CD8-positive, alpha-beta T cell (primary cell): ENCODE measurements at regions of chr3 and their contacts with region 1.

Region 1: GRCh38 chr3:23800731-23801130 is 5.0 kb upstream of the UBE2E1 start:
- DNase-seq: peak in 2 of 9 experiments; percentile 9 to 20
- ATAC-seq: no peak
- H3K4me3 ChIP-seq: no peak overlapping the region
- H3K4me3 Mint-ChIP-seq: no peak overlapping the region
- H3K27ac ChIP-seq: no peak overlapping the region
- H3K27ac Mint-ChIP-seq: no peak overlapping the region
- H3K4me1 ChIP-seq: peaks cover 6% of the 10 kb centered on the region
- H3K4me1 Mint-ChIP-seq: peaks cover 10% of the 10 kb centered on the region
- H3K27me3 ChIP-seq: no peaks in the 10 kb centered on the region
- H3K27me3 Mint-ChIP-seq: no peaks in the 10 kb centered on the region
- CTCF ChIP-seq: no peak

Region 2: GRCh38 chr3:22555753-22556435 is 1244.8 kb before region 1 on chr3:
- CTCF ChIA-PET with region 1: no interaction called
- POLR2A ChIA-PET with region 1: no interaction called
- intact Hi-C with region 1: loop called in 1 of 2 experiments (anchors 5 kb)
- DNase-seq: no peak
- ATAC-seq: no peak
- H3K4me3 ChIP-seq: no peak overlapping the region
- H3K4me3 Mint-ChIP-seq: no peak overlapping the region
- H3K27ac ChIP-seq: no peak overlapping the region
- H3K27ac Mint-ChIP-seq: no peak overlapping the region
- H3K4me1 ChIP-seq: no peaks in the 10 kb centered on the region
- H3K4me1 Mint-ChIP-seq: no peaks in the 10 kb centered on the region
- H3K27me3 ChIP-seq: no peaks in the 10 kb centered on the region
- H3K27me3 Mint-ChIP-seq: no peaks in the 10 kb centered on the region
- CTCF ChIP-seq: no peak

Region 3: GRCh38 chr3:23811185-23811527 is 10.4 kb after region 1 on chr3:
- CTCF ChIA-PET with region 1: no interaction called
- POLR2A ChIA-PET with region 1: no interaction called
- intact Hi-C with region 1: no loop called
- DNase-seq: peak in 1 of 9 experiments; percentile 6
- ATAC-seq: no peak
- H3K4me3 ChIP-seq: peak overlapping the region; percentile 64 to 68
- H3K4me3 Mint-ChIP-seq: peak overlapping the region; percentile 93
- H3K27ac ChIP-seq: peak overlapping the region in 1 of 2 experiments; percentile 43
- H3K27ac Mint-ChIP-seq: peak overlapping the region; percentile 90
- H3K4me1 ChIP-seq: peaks cover 32% of the 10 kb centered on the region
- H3K4me1 Mint-ChIP-seq: peaks cover 65% of the 10 kb centered on the region
- H3K27me3 ChIP-seq: no peaks in the 10 kb centered on the region
- H3K27me3 Mint-ChIP-seq: no peaks in the 10 kb centered on the region
- CTCF ChIP-seq: no peak

Region 4: DNA sequence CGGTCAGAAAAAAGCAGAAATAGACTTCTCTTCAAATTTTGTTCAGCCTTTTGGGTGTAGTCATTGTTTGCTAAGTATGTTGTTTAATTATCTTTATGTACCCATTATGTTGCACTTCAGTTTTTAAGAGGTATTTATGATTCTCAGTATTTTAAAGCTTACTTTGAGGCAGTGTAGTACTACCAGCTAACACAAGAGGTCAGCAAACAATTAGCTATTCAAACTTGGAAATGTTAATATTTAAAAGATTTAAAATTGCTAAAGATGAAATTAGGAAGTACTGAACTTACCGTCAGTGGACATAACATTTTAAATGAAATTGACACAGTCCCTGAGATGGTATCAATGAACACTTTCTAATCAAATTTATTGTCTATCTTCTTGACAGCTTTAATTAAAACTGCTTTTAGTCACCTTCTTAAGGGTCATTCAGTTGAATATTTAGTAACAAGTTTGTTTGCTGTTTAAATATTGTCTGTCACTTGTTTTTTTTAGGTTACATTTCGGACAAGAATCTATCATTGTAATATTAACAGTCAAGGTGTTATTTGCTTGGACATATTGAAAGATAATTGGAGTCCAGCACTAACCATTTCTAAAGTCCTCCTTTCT is 88.0 kb after region 1 on chr3:
- CTCF ChIA-PET with region 1: no interaction called
- POLR2A ChIA-PET with region 1: no interaction called
- intact Hi-C with region 1: no loop called
- DNase-seq: peak in 3 of 9 experiments; percentile 17 to 63 (median 54)
- ATAC-seq: peak; percentile 56
- H3K4me3 ChIP-seq: no peak overlapping the region
- H3K4me3 Mint-ChIP-seq: no peak overlapping the region
- H3K27ac ChIP-seq: no peak overlapping the region
- H3K27ac Mint-ChIP-seq: peak overlapping the region; percentile 47
- H3K4me1 ChIP-seq: no peaks in the 10 kb centered on the region
- H3K4me1 Mint-ChIP-seq: peaks cover 2% of the 10 kb centered on the region
- H3K27me3 ChIP-seq: no peaks in the 10 kb centered on the region
- H3K27me3 Mint-ChIP-seq: no peaks in the 10 kb centered on the region
- CTCF ChIP-seq: peak; percentile 96